ENCODE measurements at regions of chr11 and their contacts with region 1.

Region 1: DNA sequence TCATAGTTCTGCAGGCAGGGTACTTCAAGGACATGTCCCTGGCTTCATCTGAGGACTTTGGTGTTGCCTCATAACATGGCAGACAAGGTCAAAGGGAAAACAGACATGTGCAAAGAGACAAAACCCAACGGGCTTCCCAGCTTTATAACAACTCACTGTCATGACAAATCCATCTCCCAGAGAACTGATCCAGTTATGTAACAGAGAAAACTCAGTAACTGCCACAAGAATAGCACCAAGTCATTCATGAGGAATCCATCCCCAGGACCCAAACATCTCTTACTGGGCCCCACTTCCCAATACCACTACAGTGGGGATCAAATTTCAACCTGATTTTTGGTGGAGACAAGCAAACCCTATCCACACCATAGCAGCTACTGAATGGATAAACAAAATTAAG is 13.0 kb downstream of the OR52N4 start:
- DNase-seq: no peak
- ATAC-seq: no peak
- H3K4me3 ChIP-seq: no peak overlapping the region
- H3K27ac ChIP-seq: no peak overlapping the region
- H3K4me1 ChIP-seq: no peaks in the 10 kb centered on the region
- H3K27me3 ChIP-seq: no peaks in the 10 kb centered on the region
- CTCF ChIP-seq: no peak

Region 2: GRCh38 chr11:5726351-5726750 is 40.7 kb before region 1 on chr11:
- intact Hi-C with region 1: loop called in 1 of 10 experiments (anchors 2 kb)
- DNase-seq: no peak
- ATAC-seq: no peak
- H3K4me3 ChIP-seq: no peak overlapping the region
- H3K27ac ChIP-seq: no peak overlapping the region
- H3K4me1 ChIP-seq: no peaks in the 10 kb centered on the region
- H3K27me3 ChIP-seq: no peaks in the 10 kb centered on the region
- CTCF ChIP-seq: no peak

Region 3: GRCh38 chr11:5791165-5791564 is 24.1 kb after region 1 on chr11 and contains the start of gene OR52N1:
- intact Hi-C with region 1: loop called in 3 of 10 experiments (anchors 1 to 2 kb)
- DNase-seq: no peak
- ATAC-seq: no peak
- H3K4me3 ChIP-seq: no peak within 1 kb of the TSS
- H3K27ac ChIP-seq: no peak within 1 kb of the TSS
- H3K4me1 ChIP-seq: no peaks in the 10 kb centered on the region
- H3K27me3 ChIP-seq: peaks cover 0 to 7% (median 0%) of the 10 kb centered on the region in 7 donors
- CTCF ChIP-seq: no peak
- total RNA-seq, gene OR52N1: 0.09 TPM in 1 of 10 donors, not detected in the others

Region 4: DNA sequence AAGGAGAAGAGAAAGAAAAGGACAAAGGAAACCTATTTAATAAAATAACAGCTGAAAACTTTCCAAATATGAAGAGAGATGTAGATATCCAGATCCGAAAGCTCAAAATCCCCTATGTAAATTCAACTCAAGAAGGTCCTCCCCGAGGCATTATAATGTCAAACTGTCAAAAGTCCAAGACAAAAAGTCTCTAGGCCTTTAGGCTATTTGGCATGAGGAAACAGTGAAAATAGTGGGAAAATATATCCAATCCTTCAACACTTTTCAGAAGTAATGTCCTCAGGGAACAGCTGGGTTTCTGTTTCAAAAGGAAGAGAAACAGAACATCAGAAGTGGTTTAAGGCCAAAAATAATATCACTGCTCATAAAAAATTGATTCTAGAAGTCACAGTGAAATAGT is 111.5 kb after region 1 on chr11:
- intact Hi-C with region 1: no loop called
- DNase-seq: no peak
- ATAC-seq: no peak
- H3K4me3 ChIP-seq: no peak overlapping the region
- H3K27ac ChIP-seq: no peak overlapping the region
- H3K4me1 ChIP-seq: no peaks in the 10 kb centered on the region
- H3K27me3 ChIP-seq: no peaks in the 10 kb centered on the region
- CTCF ChIP-seq: no peak